ENCODE measurements at regions of chr11 and their contacts with region 1.

Region 1: DNA sequence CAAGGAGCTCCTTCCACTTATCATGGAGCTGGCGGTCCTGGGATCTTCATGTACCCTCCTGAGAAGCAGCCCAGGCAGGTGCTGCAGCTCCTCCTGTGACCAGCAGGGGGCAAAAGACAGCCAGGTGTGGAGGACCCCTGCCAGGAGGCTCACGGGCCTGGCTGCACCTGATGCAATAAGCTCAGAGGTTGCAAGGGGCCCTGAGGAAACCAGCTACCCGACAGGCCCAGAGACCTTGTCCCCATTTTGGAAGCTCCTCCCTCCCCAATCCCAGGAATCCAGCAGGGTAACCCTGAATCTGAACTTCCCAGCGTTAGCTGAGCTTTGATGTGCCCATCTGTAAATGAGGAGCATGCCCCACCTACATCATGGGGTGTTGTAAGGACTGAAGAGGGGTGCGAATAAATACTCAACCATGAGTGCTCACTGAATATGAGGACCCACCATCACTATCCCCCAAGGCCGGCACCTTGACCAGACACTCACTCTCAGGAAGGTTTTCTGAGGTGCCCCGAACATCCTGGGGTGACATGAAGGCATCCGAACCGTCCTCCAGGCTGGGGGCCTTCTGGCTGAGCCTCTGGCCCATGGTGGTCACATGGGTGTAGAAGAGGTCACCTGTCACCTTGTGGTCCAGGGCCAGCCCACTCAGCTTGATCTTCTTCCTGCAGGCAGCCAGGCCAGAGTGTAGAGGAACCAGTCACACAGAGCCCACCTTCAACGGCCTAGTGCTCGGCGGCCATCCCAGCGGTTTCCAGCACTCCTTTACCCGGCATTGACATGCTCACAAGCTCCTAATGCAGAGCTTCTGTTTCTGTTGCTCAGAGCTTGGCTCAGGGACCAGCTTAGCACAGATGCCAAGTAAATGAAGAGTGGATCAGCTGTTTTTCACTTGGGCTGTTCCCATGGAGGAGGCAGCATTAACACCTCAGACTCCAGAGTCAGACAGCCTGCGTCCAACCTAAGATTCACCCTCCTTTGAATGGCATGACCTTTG is 21.7 kb downstream of the SLC43A1 start:
- DNase-seq: peak; percentile 81
- CTCF ChIP-seq: peak; percentile 96

Region 2: DNA sequence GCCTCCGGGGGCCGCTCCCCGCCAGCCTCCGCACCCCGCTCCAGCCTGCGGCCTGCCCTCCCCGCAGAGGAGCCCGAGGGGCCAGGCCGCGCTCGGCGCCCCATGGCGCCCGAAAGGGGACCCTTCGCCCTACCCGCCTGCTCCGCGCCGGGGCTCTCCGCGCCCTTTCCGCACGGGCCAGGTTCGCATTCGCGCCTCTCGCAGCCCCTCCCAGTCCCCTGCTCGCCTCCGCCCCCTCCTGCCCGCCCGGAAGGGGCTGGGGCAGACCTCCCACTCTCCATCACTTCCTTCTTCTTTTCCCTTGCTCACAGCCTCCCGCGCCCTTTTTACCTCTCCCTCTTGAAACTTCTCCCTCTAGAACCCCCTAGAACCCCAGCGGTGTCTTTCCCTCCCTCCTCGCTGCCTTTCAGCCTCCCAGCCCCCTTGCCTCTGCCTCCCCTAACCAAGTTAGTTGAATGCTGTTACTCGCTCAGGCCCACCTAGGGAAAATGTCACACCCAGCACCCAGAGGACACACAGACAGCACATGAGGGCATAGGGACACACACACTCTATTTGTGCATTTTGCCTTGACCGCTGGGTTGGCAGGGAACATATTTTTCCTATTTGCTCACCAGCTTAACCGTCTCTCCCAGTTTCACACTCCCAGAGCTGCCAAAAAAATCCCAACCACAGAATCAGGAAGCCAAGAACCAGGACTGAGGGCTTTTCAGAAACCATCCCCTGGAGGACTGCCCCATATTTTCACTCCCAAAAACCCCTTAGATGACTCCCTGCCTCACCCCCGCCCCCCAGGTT is 66.7 kb before region 1 on chr11 and contains the start of gene SLC43A3:
- CTCF ChIA-PET with region 1: interaction called, 10 read pairs
- POLR2A ChIA-PET with region 1: no interaction called
- DNase-seq: peak; percentile 85
- CTCF ChIP-seq: no peak

Region 3: DNA sequence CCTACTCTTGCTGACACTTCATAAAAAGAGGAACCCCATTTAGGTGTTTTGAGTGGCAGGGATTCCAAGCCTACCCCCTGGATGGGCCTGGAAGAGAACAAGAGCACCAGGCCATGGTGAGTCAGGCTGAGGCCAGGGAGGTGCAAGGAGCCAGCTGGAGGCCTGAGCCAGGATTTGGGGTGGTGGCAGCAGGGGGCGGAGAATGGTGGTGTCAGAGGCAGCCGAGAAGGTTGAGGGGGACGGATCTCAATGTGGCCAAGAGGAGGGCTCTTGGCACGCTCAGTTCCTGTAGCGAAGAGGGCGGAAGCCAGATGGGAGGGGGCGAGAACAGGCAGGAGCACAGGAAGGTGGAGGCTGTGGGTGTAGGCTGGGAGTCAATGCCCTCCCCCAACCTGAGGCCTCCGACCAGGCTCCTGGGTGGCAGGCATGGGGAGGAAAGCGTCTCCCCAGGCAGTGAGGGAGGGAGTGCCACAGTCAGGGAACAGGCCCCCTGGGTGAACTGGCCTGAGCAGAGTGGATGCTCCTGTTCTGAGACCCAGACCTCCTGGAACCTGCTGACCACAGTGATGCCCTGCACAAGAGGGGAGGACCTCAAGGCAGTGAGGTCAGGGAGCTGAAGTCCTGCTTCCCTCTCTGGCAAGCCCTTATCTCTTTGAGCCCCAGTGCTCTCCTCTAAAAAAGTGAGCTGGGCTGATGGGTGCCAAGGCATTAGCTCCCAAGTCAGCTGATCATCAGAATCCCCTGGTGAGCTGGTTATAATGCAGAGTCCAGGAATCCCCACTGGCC is 19.6 kb before region 1 on chr11:
- CTCF ChIA-PET with region 1: interaction called, 23 read pairs
- POLR2A ChIA-PET with region 1: no interaction called
- DNase-seq: no peak
- CTCF ChIP-seq: no peak

Region 4: GRCh38 chr11:57515332-57516060 is 21.7 kb after region 1 on chr11 and contains the start of gene SLC43A1:
- CTCF ChIA-PET with region 1: interaction called, 121 read pairs
- POLR2A ChIA-PET with region 1: no interaction called
- DNase-seq: peak; percentile 66
- CTCF ChIP-seq: no peak

Region 5: DNA sequence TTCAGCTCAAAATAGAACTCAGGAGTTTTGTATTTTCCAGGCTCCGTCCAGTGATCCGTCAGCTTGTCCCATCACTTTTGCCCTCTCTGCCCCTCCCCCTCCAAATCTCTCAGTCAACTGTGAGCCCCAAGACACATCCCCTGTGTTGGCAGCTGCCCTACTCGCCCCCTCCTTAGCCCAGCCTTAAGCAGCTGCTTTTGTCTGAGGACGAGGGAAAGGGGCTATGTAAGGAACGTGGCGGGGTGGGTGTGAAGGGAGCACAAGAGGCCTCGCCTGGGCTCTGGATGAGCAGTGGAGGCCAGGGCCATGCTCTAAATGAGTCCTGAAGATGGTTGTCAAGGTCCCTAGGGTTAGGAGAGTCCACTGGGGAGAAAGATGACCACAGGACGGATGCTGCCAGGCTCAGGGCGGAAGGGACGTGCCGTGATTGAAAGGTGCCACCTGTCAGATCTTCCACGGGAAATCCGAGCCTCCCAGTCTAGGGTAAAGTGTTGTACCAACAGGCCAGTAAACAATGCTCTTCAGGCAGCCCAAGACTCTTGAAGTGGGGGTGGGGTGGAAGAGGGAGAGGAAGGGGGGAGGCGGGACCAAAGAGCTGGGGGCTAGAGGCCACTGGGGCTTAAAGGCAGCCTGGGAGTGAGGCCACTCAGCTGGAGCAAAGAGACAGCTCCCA is 43.3 kb after region 1 on chr11 and contains the start of gene SMTNL1:
- CTCF ChIA-PET with region 1: interaction called, 30 read pairs
- POLR2A ChIA-PET with region 1: no interaction called
- DNase-seq: no peak
- CTCF ChIP-seq: no peak

Region 6: DNA sequence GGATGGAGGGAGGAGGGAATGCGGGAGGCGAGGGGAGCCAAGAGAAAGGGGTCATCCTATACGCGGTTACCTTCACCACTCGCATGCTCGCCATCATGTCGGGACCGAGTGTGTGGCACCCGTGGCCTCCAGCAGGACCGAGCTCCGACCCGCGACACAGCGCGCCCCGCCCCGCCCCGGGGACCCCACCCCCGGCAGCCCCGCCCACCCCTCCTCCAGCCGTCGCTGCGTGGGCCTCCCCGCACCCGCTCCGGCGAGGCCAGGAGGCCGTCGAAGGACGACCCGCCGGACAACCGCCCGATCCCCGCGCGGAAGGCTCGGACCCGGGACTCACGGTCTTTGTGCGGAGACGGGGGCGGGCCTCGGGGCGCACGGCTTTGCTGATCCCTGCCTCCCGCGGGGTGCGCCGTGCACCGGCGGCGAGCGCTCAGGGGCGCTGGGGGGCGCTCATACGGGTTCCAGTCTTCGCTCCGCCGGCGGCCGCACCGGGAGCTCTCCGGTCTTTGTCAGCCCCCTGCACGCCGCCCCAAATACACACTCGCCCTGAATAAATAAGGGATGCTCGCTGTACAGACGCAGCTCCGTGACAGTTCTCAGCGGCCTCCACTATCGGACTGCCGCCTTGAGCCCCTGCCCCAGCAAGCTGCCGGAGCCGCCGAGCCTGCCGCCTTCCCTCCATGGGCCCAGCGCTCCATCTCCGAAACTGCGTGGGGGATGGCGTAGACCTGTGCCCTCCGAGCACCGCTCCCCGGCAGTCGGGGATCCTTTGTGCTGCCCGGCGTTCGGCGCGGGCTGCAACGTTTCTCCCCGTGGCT is 73.9 kb after region 1 on chr11 and contains the start of gene UBE2L6:
- CTCF ChIA-PET with region 1: interaction called, 12 read pairs
- POLR2A ChIA-PET with region 1: no interaction called
- DNase-seq: peak; percentile 79
- CTCF ChIP-seq: peak; percentile 91

Region 7: GRCh38 chr11:58513747-58514367 is 1020.1 kb after region 1 on chr11:
- CTCF ChIA-PET with region 1: interaction called, 14 read pairs
- POLR2A ChIA-PET with region 1: no interaction called
- DNase-seq: peak; percentile 22
- CTCF ChIP-seq: peak; percentile 68

Measured in GM10248 (cell line).